ENCODE measurements at regions of chr21 and their contacts with region 1.

Region 1: DNA sequence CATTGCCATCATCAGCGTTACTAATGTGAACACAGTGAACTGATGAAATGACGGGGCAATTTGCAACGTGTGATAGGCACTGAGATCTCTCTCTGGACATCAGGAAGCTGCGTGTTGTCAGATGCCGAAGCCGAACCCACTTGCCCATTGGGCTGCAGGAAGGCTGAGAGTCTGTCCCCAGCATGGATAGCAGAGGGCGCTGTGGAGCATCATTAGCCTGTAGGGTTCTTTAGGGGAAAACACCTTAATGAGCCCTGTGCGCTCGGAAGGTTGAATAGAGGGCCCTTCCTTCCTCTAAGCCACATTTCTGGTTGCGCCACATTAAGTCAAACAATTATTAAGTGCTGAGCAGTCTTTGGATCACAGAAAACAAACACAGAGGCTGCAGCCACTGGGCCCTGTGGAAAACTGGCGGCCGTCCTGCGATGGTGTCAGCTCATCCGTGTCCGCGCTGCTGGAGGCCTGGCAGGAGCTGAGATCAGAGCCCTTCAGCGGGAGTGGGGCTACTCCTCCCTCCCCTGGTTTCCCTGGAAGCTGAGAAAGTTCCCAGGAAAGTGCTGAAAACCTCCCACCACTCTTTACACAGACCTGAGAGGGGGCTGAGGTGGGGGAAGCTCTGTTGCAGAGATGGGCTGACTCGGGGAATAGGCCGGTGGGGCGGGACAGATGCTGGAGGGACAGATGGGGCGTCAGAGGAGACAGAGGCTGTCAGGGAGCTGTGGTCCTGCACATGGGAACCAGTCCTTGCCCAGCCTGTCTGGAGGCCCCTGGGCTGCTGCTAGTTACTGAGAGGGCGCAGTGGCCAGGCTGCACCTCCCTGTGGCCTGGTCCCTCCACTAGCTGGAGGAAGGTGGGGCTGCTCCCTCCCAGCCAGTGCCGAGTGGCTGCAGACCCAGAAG is 12.7 kb downstream of the TFF2 start:
- DNase-seq: peak; percentile 54 to 89
- H3K4me3 ChIP-seq: no peak overlapping the region
- H3K27ac ChIP-seq: no peak overlapping the region
- H3K4me1 ChIP-seq: peaks cover 0 to 13% (median 4%) of the 10 kb centered on the region in 4 experiments; a peak in 6 of 7 replicates
- H3K27me3 ChIP-seq: no peaks in the 10 kb centered on the region
- CTCF ChIP-seq: peak; percentile 86 to 94 (median 89)
- EP300 ChIP-seq: no peak
- POLR2A ChIP-seq: no peak
- RAD21 ChIP-seq: peak; percentile 71 to 77

Region 2: DNA sequence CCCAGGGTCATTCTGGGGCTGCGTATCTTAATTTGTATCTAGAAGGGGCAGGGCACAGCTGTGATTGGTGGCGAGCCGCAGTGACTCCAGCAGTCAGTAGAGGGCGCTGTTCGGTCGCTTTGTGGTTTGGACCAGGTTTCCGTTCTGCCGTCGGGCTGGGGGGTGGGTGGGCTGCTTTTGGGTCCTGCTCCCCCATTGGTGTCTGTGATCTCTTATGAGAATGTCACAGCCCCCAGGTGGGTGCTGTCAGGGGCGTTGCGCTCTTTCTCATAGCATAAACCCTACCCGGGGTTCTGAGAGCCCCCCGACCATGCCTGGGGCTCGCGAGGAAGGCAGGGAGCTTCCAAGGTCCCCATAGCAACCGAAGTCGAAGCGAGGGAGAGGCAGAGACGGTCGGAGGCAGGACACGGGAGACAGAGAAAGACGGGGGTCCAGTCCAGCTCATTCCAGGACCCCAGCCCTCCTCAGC is 28.3 kb before region 1 on chr21:
- CTCF ChIA-PET with region 1: interaction called, 137 read pairs
- POLR2A ChIA-PET with region 1: interaction called, 4 read pairs
- DNase-seq: peak in 1 of 2 experiments; percentile 96
- H3K4me3 ChIP-seq: peak overlapping the region in 3 of 4 experiments; percentile 28 to 54 (median 30); a peak in 4 of 8 replicates
- H3K27ac ChIP-seq: no peak overlapping the region
- H3K4me1 ChIP-seq: peaks cover 4 to 14% (median 6%) of the 10 kb centered on the region in 4 experiments
- H3K27me3 ChIP-seq: peaks cover 0 to 7% (median 3%) of the 10 kb centered on the region in 4 experiments; a peak in 2 of 7 replicates
- CTCF ChIP-seq: peak in 2 of 3 experiments; percentile 85 to 88; a peak in 3 of 4 replicates
- EP300 ChIP-seq: no peak
- POLR2A ChIP-seq: no peak
- RAD21 ChIP-seq: peak; percentile 77 to 86

Region 3: DNA sequence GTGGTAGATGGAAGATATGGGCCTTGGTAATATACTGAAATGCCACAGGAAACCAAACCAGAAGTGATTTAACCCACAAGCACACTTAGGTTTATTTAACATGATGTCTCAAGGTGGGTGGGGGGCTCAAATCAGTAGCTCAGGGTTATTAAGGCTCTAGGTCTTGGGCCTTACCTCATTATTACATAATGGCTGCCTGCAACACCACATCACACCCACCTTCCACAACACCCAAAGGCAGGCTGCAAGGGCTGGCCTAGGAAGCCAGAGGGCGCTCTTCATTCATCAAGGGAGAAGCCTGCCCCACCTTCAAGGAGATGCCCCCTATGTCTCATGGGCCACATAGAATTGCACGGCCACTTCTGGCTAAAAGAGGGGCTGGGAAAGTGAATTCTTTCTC is 22.2 kb after region 1 on chr21:
- CTCF ChIA-PET with region 1: interaction called, 28 read pairs
- POLR2A ChIA-PET with region 1: interaction called, 3 read pairs
- DNase-seq: no peak
- H3K4me3 ChIP-seq: no peak overlapping the region
- H3K27ac ChIP-seq: no peak overlapping the region
- H3K4me1 ChIP-seq: no peaks in the 10 kb centered on the region
- H3K27me3 ChIP-seq: no peaks in the 10 kb centered on the region
- CTCF ChIP-seq: peak; percentile 60 to 70 (median 66)
- EP300 ChIP-seq: no peak
- POLR2A ChIP-seq: no peak
- RAD21 ChIP-seq: peak; percentile 64 to 75

Region 4: GRCh38 chr21:42366321-42367009 is 28.4 kb after region 1 on chr21 and contains the start of gene TFF1:
- CTCF ChIA-PET with region 1: interaction called, 28 read pairs
- POLR2A ChIA-PET with region 1: interaction called, 3 read pairs
- DNase-seq: no peak
- H3K4me3 ChIP-seq: no peak within 1 kb of the TSS
- H3K27ac ChIP-seq: no peak within 1 kb of the TSS
- H3K4me1 ChIP-seq: no peaks in the 10 kb centered on the region; a peak in 3 of 7 replicates
- H3K27me3 ChIP-seq: peaks cover 0 to 2% (median 0%) of the 10 kb centered on the region in 4 experiments; a peak in 1 of 7 replicates
- CTCF ChIP-seq: no peak
- EP300 ChIP-seq: no peak
- POLR2A ChIP-seq: no peak
- RAD21 ChIP-seq: no peak
- total RNA-seq, gene TFF1: not detected in 2 replicates

Region 5: DNA sequence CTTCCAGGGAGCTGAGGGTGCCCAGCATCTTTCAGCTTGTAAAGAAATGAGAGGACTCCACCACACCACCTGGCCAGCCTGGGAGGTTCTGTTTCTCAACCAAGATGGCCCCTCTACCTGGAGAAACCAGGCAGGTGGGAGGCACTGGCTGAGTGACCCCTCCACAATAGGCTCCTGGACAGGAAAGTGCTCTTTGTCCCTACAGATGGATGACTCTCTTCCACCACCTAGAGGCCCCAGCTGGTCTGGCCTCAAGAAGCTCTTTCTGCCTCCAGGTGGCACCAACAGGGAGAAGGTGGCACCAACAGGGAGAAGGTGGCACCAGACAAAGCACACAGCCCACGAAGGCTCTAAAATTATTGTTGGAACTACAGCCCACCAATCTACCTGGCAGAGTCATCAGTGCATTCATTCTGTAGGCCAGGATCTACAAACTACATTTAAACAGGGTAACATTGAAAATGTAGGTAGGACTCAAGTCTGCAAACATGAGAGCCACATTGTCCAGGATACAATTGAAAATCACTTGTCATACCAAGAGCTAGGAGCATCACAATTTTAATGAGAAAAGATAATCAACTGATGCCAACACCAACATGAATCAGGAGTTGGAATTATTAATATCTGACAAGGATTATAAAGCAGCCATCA is 43.4 kb after region 1 on chr21:
- CTCF ChIA-PET with region 1: interaction called, 23 read pairs
- POLR2A ChIA-PET with region 1: no interaction called
- DNase-seq: no peak
- H3K4me3 ChIP-seq: no peak overlapping the region
- H3K27ac ChIP-seq: no peak overlapping the region
- H3K4me1 ChIP-seq: no peaks in the 10 kb centered on the region
- H3K27me3 ChIP-seq: no peaks in the 10 kb centered on the region; a peak in 1 of 7 replicates
- CTCF ChIP-seq: peak; percentile 73 to 99 (median 87)
- EP300 ChIP-seq: no peak
- POLR2A ChIP-seq: no peak
- RAD21 ChIP-seq: peak; percentile 78 to 84

Region 6: GRCh38 chr21:42411191-42411869 is 73.3 kb after region 1 on chr21:
- CTCF ChIA-PET with region 1: interaction called, 19 read pairs
- POLR2A ChIA-PET with region 1: no interaction called
- DNase-seq: no peak
- H3K4me3 ChIP-seq: no peak overlapping the region
- H3K27ac ChIP-seq: no peak overlapping the region
- H3K4me1 ChIP-seq: peaks cover 0 to 3% (median 1%) of the 10 kb centered on the region in 4 experiments; a peak in 4 of 7 replicates
- H3K27me3 ChIP-seq: no peaks in the 10 kb centered on the region
- CTCF ChIP-seq: peak; percentile 46 to 69 (median 60)
- EP300 ChIP-seq: no peak
- POLR2A ChIP-seq: no peak
- RAD21 ChIP-seq: peak; percentile 31 to 49; a peak in 3 of 4 replicates

Region 7: DNA sequence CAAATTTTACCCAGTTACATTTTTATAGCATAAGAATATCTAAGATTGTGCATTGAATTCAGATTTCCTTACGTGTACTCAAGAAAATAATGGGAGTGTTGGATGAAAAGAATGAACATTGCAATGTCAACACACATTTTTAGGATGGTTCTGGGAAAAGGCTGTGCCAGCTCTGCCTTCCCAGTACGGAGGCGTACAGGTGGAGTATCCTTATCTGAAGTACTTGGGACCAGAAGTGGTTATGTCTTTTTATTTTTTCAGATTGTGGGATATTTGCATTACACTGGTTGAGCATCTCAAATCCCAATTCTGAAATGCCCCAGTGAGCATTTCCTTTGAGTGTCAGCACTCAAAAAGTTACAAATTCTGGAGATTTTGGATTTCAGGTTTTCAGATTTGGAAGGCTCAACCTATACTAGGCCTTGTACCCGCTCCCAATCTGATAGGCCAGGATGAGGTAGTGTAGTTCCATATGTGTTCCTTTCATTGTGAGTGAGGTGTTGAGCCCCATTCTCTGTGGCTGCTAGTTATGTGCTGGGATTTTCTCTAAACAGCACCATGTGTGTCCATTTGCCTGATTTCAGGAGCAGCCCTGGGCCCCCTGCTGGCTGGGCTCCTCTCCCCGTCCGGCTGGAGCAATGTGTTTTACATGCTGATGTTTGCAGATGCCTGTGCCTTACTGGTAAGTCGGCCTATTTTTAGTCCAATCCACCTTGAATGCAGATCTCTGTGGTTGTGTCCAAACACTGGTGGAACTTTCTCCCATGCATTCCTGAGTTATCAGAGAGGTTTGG is 236.4 kb after region 1 on chr21:
- CTCF ChIA-PET with region 1: no interaction called
- POLR2A ChIA-PET with region 1: no interaction called
- DNase-seq: no peak
- H3K4me3 ChIP-seq: no peak overlapping the region
- H3K27ac ChIP-seq: no peak overlapping the region
- H3K4me1 ChIP-seq: no peaks in the 10 kb centered on the region
- H3K27me3 ChIP-seq: no peaks in the 10 kb centered on the region
- CTCF ChIP-seq: no peak
- EP300 ChIP-seq: no peak
- POLR2A ChIP-seq: no peak
- RAD21 ChIP-seq: no peak

Measured in H1 (cell line).